GM12878 (cell line): ENCODE measurements at regions of chr11 and their contacts with region 1.

Region 1: DNA sequence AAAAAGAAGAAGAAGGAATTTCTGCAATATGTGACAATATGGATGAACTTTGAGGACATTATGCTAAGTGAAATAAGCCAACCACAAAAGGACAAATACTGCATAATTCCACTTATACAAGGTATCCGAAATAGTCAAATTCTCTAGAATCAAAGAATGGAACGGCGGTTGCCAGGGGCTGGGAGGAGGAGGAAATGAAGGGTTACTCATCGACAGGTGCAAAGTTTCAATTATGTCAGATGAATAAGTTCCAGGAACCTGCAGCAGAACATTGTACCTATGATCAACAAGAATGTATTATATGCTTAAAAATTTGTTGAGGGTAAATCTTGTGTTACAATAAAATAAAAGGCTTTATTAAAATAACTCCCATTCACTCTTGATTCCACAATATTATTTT is 49.0 kb downstream of the SC5D start:
- DNase-seq: no peak
- ATAC-seq: peak; percentile 56
- H3K4me3 ChIP-seq: no peak overlapping the region
- H3K27ac ChIP-seq: peak overlapping the region; percentile 70
- H3K4me1 ChIP-seq: peaks cover 53% of the 10 kb centered on the region
- H3K27me3 ChIP-seq: no peaks in the 10 kb centered on the region
- CTCF ChIP-seq: no peak
- EP300 ChIP-seq: no peak
- POLR2A ChIP-seq: no peak
- RAD21 ChIP-seq: no peak

Region 2: DNA sequence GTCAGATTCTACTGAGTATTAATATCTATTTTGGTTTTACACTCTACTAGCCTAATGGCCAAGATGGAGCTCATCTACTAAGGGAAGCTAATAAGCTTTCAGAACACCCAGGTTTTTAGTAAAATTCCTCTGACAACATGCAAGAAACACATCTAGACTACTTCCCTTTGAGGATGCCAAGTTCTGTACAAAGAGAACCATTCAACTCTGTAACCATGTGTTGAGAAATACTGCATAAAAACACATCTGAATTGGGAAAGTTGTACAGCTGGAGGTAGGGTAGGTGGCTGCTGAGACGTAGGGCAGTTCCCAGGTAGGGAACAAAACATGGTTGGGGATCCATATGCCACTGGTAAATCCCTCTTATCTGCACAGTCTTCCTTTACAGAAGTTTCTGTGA is 17.2 kb after region 1 on chr11:
- CTCF ChIA-PET with region 1: interaction called, 7 read pairs
- POLR2A ChIA-PET with region 1: interaction called, 4 read pairs
- RAD21 ChIA-PET with region 1: interaction called, 4 read pairs
- SMC1A ChIA-PET with region 1: interaction called, 338 read pairs
- in situ Hi-C with region 1: no loop called
- intact Hi-C with region 1: no loop called
- DNase-seq: no peak
- ATAC-seq: no peak
- H3K4me3 ChIP-seq: no peak overlapping the region
- H3K27ac ChIP-seq: no peak overlapping the region
- H3K4me1 ChIP-seq: no peaks in the 10 kb centered on the region
- H3K27me3 ChIP-seq: no peaks in the 10 kb centered on the region
- CTCF ChIP-seq: no peak
- EP300 ChIP-seq: no peak
- POLR2A ChIP-seq: no peak
- RAD21 ChIP-seq: no peak